Mammary epithelial cell (primary cell): ENCODE measurements at regions of chr2 and their contacts with region 1.

Region 1: DNA sequence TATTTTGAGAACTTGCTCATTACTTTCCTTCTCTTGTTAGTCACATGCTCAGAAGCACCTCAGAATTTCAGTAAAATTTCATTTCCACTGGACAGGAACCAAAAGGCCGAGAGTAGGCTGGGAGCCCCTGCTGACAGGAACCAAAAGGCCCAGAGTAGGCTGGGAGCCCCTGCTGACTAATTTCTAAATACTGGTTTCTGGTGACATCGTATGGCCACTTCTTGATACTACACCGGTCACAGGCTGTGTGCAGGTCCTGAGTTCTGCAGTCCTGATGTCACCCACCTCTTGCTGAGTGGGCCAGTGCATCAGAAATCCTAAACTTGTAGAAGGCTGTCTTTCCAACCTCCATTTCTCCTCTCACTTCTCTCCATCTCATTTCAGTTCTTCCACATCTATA is 17.7 kb upstream of the EN1 start:
- DNase-seq: peak; percentile 39
- H3K4me3 ChIP-seq: no peak overlapping the region
- H3K27ac ChIP-seq: no peak overlapping the region
- H3K4me1 ChIP-seq: peaks cover 8% of the 10 kb centered on the region
- H3K27me3 ChIP-seq: no peaks in the 10 kb centered on the region
- CTCF ChIP-seq: peak; percentile 63 to 75

Region 2: DNA sequence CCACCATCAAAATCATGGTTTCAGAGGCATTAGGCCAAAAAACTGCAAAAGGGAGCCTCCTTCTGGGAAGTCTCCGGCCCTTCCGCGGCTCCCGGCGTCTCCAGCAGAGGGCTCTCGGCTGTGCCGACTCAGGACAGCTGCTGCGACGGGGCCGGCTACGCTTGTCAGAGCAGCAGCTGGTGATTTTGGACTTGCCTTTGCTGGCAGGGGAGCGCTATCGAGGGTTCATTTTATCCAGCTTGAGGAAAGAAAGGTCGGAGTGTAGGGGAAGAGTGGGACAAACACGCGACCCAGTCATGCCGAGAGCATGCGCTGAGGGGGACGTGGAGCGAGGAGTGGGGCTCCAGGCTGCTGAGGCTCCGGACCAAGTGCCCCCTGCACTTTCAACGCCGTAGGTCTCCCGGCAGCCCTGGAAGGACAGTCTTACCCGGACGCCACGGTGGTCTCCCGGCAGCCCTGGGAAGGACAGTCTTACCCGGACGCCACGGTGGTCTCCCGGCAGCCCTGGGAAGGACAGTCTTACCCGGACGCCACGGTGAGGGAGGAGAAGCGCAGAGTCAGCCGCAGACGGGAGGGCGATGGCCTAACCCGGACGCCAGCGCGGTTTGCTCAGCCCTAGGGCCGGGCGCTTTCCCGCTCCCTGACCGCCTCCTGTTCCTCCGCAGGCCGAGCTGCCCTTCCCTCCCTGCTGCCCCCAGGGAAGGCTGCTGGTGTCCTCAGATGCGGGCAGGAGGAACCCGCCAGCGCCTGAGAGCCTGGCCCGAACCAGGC is 1028.9 kb before region 1 on chr2:
- CTCF ChIA-PET with region 1: no interaction called
- dilution Hi-C with region 1: no loop called
- in situ Hi-C with region 1: no loop called
- intact Hi-C with region 1: loop called (anchors 10 kb)
- DNase-seq: peak; percentile 39
- H3K4me3 ChIP-seq: peak overlapping the region in 1 of 3 experiments; percentile 20
- H3K27ac ChIP-seq: no peak overlapping the region
- H3K4me1 ChIP-seq: peaks cover 8% of the 10 kb centered on the region
- H3K27me3 ChIP-seq: no peaks in the 10 kb centered on the region
- CTCF ChIP-seq: peak; percentile 68 to 93

Region 3: GRCh38 chr2:118032169-118033013 is 832.7 kb before region 1 on chr2:
- CTCF ChIA-PET with region 1: no interaction called
- dilution Hi-C with region 1: loop called (anchors 25 kb)
- in situ Hi-C with region 1: loop called (anchors 10 to 25 kb)
- intact Hi-C with region 1: loop called (anchors 5 kb)
- DNase-seq: peak; percentile 23
- H3K4me3 ChIP-seq: no peak overlapping the region
- H3K27ac ChIP-seq: no peak overlapping the region
- H3K4me1 ChIP-seq: no peaks in the 10 kb centered on the region
- H3K27me3 ChIP-seq: peaks cover 2% of the 10 kb centered on the region
- CTCF ChIP-seq: peak; percentile 68 to 74

Region 4: DNA sequence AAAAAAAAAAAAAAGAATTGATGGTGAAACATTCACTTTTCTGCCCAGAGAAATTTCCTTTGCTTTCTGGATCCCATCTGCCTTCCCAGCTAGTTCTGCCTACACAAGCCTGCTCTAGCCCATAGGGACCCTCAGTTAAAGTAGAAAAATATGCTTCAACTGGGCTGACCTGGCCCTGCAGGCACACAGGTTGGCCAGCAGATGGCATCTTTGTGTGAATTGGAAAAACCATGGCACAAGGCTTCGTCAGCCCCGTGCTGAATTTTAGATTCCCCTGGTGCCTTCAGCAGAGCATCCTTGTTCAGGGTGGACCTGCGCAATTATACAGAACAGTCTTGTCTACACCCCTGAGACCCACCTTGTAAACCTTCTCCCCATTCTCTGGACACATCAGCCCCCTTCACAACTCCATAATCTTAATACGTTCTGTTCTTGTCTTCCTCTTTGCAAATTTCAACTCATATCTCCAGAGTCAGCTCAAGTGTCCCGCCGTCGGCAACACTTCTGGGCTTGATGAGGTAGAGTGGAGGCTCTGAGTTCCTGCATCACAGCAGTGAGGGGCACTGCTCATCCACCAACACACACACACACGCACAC is 662.3 kb before region 1 on chr2:
- CTCF ChIA-PET with region 1: no interaction called
- dilution Hi-C with region 1: no loop called
- in situ Hi-C with region 1: no loop called
- intact Hi-C with region 1: loop called (anchors 5 kb)
- DNase-seq: peak; percentile 22
- H3K4me3 ChIP-seq: no peak overlapping the region
- H3K27ac ChIP-seq: no peak overlapping the region
- H3K4me1 ChIP-seq: no peaks in the 10 kb centered on the region
- H3K27me3 ChIP-seq: peaks cover 4% of the 10 kb centered on the region
- CTCF ChIP-seq: peak; percentile 90 to 92

Region 5: DNA sequence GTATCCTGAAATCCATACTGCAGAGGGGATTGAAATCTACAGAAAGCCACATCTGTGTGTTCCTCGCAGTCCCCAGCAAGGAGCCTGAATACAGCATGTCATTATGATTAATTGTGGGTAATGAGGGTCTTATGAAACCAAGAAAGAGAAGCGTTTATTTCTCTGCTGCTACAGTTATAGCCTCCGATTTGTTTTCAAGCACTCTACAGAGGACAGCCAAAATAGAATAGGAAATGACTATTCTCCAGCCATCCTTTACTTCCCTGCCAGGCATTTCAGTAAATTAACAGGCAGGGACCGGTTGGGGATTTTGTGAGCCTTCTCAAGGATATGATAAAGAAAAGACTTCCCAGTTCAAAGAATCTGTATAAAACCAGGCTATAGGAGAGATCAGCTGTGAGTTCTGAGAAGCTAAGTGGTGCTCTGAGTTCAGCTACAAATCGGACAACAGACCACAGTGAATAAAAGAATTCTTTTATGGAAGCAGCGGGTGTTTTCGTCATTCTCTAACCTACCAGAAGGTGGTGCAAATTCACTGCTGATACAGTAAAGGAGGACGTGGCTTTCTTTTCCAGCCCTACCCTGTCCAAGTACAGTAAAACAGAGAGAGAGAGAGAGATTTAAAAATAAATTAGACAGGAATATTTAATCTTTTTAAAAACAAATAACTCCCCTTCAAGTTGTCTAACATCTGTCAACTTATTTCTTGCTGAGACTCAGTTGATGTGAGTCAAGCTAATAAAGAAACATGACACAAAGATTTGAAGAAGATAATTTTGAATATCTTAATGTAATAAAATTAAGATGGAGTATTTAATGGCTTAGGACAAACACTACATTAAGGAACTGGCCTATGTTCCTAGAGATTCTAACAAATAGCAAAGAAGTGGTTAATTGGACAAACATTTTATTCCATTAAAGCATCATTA is 643.2 kb before region 1 on chr2:
- CTCF ChIA-PET with region 1: no interaction called
- dilution Hi-C with region 1: no loop called
- in situ Hi-C with region 1: no loop called
- intact Hi-C with region 1: loop called (anchors 1 kb)
- DNase-seq: peak; percentile 59
- H3K4me3 ChIP-seq: no peak overlapping the region
- H3K27ac ChIP-seq: no peak overlapping the region
- H3K4me1 ChIP-seq: peaks cover 6% of the 10 kb centered on the region
- H3K27me3 ChIP-seq: peaks cover 24% of the 10 kb centered on the region
- CTCF ChIP-seq: peak; percentile 79 to 80